Naive thymus-derived CD4-positive, alpha-beta T cell (primary cell): ENCODE measurements at regions of chr20 and their contacts with region 1.

Region 1: GRCh38 chr20:46689082-46689754 is at the start of gene TP53RK:
- DNase-seq: peak; percentile 85 to 98 (median 96)
- ATAC-seq: peak; percentile 97
- H3K4me3 ChIP-seq: peak within 1 kb of the TSS; percentile 84
- H3K4me3 Mint-ChIP-seq: peak within 1 kb of the TSS; percentile 90 to 100 (median 96)
- H3K27ac ChIP-seq: peak within 1 kb of the TSS; percentile 90
- H3K27ac Mint-ChIP-seq: peak within 1 kb of the TSS; percentile 91 to 97 (median 95)
- H3K4me1 ChIP-seq: peaks cover 20 to 30% of the 10 kb centered on the region in 2 donors
- H3K4me1 Mint-ChIP-seq: peaks cover 38 to 54% (median 45%) of the 10 kb centered on the region in 7 donors
- H3K27me3 ChIP-seq: no peaks in the 10 kb centered on the region
- H3K27me3 Mint-ChIP-seq: no peaks in the 10 kb centered on the region
- total RNA-seq, gene TP53RK: 4.4 to 27.7 (median 17.7) TPM

Region 2: DNA sequence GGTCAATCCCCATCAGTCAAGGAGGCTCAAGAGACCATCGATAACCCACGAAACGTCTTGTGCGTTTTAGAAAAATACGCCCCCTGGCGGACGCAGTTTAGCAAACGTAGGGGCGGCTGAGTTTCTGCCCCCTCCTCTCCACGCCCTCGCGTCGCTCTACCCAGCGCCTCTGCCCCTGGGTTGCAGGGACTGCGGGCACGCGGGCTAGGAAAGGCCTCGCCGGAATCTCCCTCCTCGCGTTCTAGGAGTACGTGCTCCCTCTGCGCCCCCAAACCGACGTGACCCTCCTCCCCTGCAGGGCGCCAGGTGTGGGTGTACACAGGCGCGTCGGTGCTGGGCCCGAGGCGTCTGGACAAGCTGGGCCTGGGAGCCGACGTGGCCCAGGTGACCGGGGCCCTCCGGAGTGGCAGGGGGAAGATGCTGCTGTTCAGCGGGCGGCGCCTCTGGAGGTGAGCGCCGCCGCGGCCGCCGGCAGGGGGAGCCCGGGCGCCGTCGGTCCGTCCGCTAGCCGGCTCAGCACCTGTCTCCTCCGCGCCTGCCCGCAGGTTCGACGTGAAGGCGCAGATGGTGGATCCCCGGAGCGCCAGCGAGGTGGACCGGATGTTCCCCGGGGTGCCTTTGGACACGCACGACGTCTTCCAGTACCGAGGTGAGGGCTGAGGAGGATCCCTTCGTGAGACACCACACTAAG is 675.2 kb before region 1 on chr20:
- CTCF ChIA-PET with region 1: no interaction called
- POLR2A ChIA-PET with region 1: no interaction called
- intact Hi-C with region 1: loop called in 1 of 2 experiments (anchors 10 kb)
- DNase-seq: peak; percentile 39 to 73 (median 60)
- ATAC-seq: peak; percentile 76
- H3K4me3 ChIP-seq: peak overlapping the region; percentile 32
- H3K4me3 Mint-ChIP-seq: peak overlapping the region; percentile 23 to 76 (median 58)
- H3K27ac ChIP-seq: no peak overlapping the region
- H3K27ac Mint-ChIP-seq: peak overlapping the region in 3 of 9 donors; percentile 1 to 43 (median 29)
- H3K4me1 ChIP-seq: peaks cover 24 to 27% of the 10 kb centered on the region in 2 donors
- H3K4me1 Mint-ChIP-seq: peaks cover 38 to 61% (median 48%) of the 10 kb centered on the region in 7 donors
- H3K27me3 ChIP-seq: peaks cover 15 to 16% of the 10 kb centered on the region in 2 donors
- H3K27me3 Mint-ChIP-seq: peaks cover 52 to 68% (median 55%) of the 10 kb centered on the region in 5 donors

Region 3: DNA sequence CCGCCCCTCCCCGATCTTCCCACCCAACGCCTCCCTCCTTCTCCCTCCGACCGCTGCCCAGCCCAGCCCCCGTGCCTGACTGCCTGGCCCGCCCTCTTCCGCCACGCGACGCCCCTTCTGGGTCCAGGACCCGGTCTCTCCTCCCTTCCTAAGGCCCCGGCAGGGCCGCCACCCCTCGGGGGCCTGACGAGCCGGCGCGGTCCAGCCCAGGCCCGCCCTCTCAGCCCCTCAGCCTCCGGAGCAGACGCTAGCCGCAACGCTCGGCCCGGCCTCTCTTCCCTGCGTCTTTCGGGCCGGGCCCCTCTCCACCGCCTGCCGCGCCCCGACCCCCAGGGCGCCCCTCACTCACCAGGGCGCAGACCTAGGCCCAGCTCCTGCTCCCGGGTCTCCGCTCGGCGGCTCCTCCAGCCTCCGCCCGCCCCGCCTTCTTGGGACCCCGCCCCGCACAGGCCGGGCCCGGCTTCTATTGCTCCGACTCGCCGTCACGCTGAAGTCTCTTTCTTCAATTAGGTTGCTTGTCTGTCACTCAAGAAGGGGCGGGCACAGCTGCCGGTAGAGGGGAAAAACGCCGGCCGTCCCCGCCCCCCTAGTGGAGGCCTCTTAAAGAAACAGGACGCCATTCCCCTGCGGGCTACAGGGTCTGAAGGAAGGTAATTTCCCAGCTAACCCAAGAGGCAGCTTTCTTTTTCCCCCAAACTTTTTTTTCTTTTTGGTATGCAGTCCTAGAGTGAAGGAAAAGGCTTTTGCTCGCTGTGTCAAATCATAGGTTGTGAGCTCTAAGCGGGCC is 282.8 kb before region 1 on chr20 and contains the start of gene ELMO2:
- CTCF ChIA-PET with region 1: no interaction called
- POLR2A ChIA-PET with region 1: no interaction called
- intact Hi-C with region 1: loop called (anchors 2 kb)
- DNase-seq: peak; percentile 81 to 97 (median 94)
- ATAC-seq: peak; percentile 95
- H3K4me3 ChIP-seq: peak within 1 kb of the TSS; percentile 86
- H3K4me3 Mint-ChIP-seq: peak within 1 kb of the TSS; percentile 88 to 97 (median 95)
- H3K27ac ChIP-seq: peak within 1 kb of the TSS; percentile 97
- H3K27ac Mint-ChIP-seq: peak within 1 kb of the TSS; percentile 88 to 97 (median 93)
- H3K4me1 ChIP-seq: peaks cover 38 to 50% of the 10 kb centered on the region in 2 donors
- H3K4me1 Mint-ChIP-seq: peaks cover 44 to 78% (median 70%) of the 10 kb centered on the region in 7 donors
- H3K27me3 ChIP-seq: no peaks in the 10 kb centered on the region
- H3K27me3 Mint-ChIP-seq: peaks cover 0 to 3% (median 0%) of the 10 kb centered on the region in 5 donors
- total RNA-seq, gene ELMO2: 50.8 to 104 (median 52.3) TPM

Region 4: DNA sequence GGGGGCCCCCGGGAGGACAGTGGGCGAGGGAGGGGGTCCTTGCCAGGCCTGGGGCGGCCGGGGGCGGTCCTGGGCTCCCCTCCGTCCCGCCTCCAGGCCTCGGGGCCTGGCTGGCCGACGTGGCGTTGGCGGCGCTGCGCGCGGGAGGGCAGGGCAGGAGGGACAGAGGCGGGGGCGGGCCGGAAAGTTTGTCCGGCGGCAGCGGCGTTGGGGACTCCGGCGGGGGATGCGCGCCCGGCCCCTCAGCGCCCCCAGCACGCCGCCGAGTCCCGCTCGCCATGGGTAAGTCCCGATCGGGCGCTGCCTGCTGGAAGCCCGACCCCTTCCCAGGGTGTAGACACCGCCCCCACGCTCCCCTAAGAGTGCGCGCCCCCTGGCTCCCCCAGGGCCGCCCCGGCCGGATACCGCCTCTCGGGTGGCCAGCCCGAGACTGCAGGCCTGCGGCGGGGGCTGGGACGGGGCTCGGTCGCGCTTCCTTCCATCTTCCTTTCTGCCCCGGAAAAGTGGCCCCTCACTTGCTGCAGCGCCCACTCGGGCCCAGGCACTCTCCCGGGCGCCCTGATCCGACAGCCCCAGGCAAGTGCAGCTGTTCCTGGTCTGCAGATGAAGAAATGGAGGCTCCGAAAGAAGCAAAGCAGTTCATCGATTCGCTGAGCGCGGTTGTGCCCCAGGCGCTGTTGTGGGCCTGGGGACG is 20.4 kb after region 1 on chr20 and contains the start of gene SLC2A10:
- CTCF ChIA-PET with region 1: no interaction called
- POLR2A ChIA-PET with region 1: no interaction called
- intact Hi-C with region 1: no loop called
- DNase-seq: no peak
- ATAC-seq: peak; percentile 59
- H3K4me3 ChIP-seq: peak within 1 kb of the TSS; percentile 33
- H3K4me3 Mint-ChIP-seq: peak within 1 kb of the TSS; percentile 57 to 83 (median 76)
- H3K27ac ChIP-seq: no peak within 1 kb of the TSS
- H3K27ac Mint-ChIP-seq: peak within 1 kb of the TSS in 1 of 9 donors; percentile 10
- H3K4me1 ChIP-seq: peaks cover 0 to 4% of the 10 kb centered on the region in 2 donors
- H3K4me1 Mint-ChIP-seq: peaks cover 8 to 15% (median 12%) of the 10 kb centered on the region in 7 donors
- H3K27me3 ChIP-seq: peaks cover 3 to 7% of the 10 kb centered on the region in 2 donors
- H3K27me3 Mint-ChIP-seq: peaks cover 55 to 73% (median 66%) of the 10 kb centered on the region in 5 donors
- total RNA-seq, gene SLC2A10: 0.05 to 0.17 TPM in 2 of 5 experiments, not detected in the others

Region 5: GRCh38 chr20:46857061-46857831 is 168.0 kb after region 1 on chr20:
- CTCF ChIA-PET with region 1: no interaction called
- POLR2A ChIA-PET with region 1: no interaction called
- intact Hi-C with region 1: no loop called
- DNase-seq: no peak
- ATAC-seq: no peak
- H3K4me3 ChIP-seq: no peak overlapping the region
- H3K4me3 Mint-ChIP-seq: no peak overlapping the region
- H3K27ac ChIP-seq: no peak overlapping the region
- H3K27ac Mint-ChIP-seq: no peak overlapping the region
- H3K4me1 ChIP-seq: no peaks in the 10 kb centered on the region
- H3K4me1 Mint-ChIP-seq: no peaks in the 10 kb centered on the region
- H3K27me3 ChIP-seq: no peaks in the 10 kb centered on the region
- H3K27me3 Mint-ChIP-seq: peaks cover 5 to 25% (median 12%) of the 10 kb centered on the region in 5 donors

Region 6: DNA sequence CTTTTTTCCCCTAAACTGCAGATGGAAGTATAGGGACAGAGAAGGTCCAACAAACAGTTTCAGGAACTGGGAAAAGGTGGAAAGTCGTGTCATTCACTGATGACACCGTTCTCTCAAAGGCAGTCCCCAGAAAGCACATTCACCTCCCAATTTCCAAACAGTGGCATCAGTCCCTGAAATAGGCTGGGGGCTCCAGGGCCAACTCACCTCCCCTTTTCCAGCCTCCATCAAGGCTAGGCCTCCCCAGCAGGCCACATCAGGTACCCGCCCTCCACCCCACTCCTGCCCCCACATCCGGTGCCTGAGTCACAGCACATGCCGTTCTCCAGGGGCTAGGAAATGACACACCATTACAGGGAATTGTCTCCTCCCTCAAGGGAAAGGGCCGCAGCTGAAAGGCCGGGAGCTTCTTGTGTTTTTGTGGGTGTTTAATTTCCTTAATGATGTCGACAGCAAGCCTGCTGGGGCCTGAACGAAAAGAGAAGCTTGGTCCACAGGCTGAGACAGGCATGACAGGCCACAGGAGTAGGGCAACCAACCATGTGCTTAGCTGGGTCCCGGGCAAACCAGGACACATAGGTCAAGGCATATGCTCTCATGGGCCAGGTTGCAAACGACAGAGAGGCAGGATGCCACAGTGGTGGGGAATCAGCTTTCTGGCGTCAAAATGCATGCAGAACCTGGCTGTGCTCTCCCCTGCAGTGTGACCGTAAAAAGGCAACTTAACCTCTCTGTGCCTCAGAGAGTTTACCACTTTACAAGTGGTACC is 628.1 kb after region 1 on chr20:
- CTCF ChIA-PET with region 1: no interaction called
- POLR2A ChIA-PET with region 1: no interaction called
- intact Hi-C with region 1: no loop called
- DNase-seq: peak in 6 of 9 donors; percentile 7 to 67 (median 16)
- ATAC-seq: peak; percentile 73
- H3K4me3 ChIP-seq: no peak overlapping the region
- H3K4me3 Mint-ChIP-seq: peak overlapping the region in 9 of 10 donors; percentile 18 to 80 (median 57)
- H3K27ac ChIP-seq: peak overlapping the region; percentile 55
- H3K27ac Mint-ChIP-seq: peak overlapping the region in 8 of 9 donors; percentile 60 to 92 (median 86)
- H3K4me1 ChIP-seq: peaks cover 15 to 30% of the 10 kb centered on the region in 2 donors
- H3K4me1 Mint-ChIP-seq: peaks cover 29 to 85% (median 75%) of the 10 kb centered on the region in 7 donors
- H3K27me3 ChIP-seq: no peaks in the 10 kb centered on the region
- H3K27me3 Mint-ChIP-seq: no peaks in the 10 kb centered on the region

Region 7: DNA sequence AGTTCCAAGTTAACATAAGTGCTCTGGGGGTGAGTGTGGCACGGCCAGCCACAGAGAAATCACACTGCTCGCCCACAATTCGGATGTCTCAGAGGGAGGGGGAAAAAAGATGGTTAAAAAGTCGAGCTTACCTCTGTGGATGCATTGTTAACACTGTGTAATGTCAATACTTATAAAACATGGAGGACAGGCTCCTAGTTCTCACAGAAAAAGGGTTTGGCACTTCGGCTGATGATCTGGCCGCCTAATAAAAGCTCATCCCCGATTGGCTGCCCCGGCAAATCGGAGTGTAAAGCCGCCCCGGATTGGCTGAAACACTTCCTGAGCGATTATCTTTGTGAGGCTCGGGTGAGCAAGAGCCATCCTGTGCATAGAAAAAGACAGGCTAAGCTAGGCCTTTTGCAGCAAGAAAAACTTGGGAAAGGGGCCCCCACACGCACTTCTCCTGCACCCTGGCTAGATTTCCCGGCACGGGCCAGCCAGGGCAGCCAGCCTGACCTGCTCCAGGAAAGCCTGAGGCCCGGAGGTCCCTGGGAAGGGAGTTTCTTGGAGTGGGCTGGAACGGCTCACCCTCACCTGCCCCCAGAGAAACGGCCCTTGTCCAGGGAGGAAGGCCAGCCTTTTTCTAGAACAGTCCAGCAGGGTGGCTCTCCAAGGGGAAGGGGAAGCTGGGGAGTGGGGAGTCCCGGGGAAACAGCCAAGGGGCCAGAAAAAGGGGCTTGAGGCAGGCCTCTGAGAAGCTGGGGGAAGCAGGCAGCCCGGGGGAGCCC is 667.5 kb after region 1 on chr20 and contains the start of gene ZMYND8:
- CTCF ChIA-PET with region 1: no interaction called
- POLR2A ChIA-PET with region 1: no interaction called
- intact Hi-C with region 1: loop called (anchors 10 kb)
- DNase-seq: peak; percentile 88 to 100 (median 98)
- ATAC-seq: peak; percentile 91
- H3K4me3 ChIP-seq: peak within 1 kb of the TSS; percentile 75
- H3K4me3 Mint-ChIP-seq: peak within 1 kb of the TSS in 4 of 10 donors; percentile 88 to 95 (median 92)
- H3K27ac ChIP-seq: peak within 1 kb of the TSS; percentile 86
- H3K27ac Mint-ChIP-seq: peak within 1 kb of the TSS in 7 of 9 donors; percentile 97 to 100 (median 99)
- H3K4me1 ChIP-seq: peaks cover 47 to 65% of the 10 kb centered on the region in 2 donors
- H3K4me1 Mint-ChIP-seq: peaks cover 51 to 74% (median 53%) of the 10 kb centered on the region in 7 donors
- H3K27me3 ChIP-seq: no peaks in the 10 kb centered on the region
- H3K27me3 Mint-ChIP-seq: no peaks in the 10 kb centered on the region
- total RNA-seq, gene ZMYND8: 54.5 to 83.0 (median 68.5) TPM